HepG2 (cell line): ENCODE measurements at regions of chr9 and their contacts with region 1.

Region 1: DNA sequence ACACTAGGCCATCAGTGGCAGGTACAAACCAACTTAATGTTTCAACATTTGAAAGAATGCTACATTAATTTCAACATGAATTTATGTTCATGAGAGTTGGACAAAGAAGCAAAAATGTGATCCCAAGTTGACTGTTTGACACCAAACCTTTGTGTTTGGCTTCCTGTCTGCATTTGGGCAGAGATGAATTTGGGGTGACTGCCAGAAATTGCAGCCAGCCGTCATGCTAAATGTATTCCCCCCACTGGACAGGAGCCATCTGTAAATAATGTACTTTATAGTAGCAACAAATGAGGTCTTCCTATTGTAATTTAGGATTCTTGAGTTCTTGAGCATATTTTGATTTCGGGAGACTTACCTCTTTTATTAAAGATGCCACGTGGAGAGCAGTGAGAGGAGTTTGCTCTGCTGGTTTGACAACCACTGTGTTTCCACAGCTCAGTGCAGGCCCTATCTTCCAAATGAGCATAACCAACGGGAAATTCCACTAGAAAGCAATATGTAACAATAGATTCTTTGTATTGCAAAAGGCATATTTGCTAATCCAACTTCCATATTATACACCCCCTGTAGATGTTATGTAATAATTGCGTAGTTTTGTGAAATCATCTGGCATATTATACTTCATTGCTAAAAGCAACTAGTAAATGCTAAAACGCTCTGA is 27.6 kb downstream of the ALDH1A1 start:
- DNase-seq: peak; percentile 79
- ATAC-seq: peak; percentile 83
- H3K4me3 ChIP-seq: no peak overlapping the region
- H3K27ac ChIP-seq: peak overlapping the region; percentile 36
- H3K4me1 ChIP-seq: peaks cover 20% of the 10 kb centered on the region
- H3K27me3 ChIP-seq: no peaks in the 10 kb centered on the region
- CTCF ChIP-seq: no peak
- EP300 ChIP-seq: peak in 1 of 2 experiments; percentile 64; a peak in 2 of 4 replicates
- POLR2A ChIP-seq: no peak
- RAD21 ChIP-seq: no peak

Region 2: DNA sequence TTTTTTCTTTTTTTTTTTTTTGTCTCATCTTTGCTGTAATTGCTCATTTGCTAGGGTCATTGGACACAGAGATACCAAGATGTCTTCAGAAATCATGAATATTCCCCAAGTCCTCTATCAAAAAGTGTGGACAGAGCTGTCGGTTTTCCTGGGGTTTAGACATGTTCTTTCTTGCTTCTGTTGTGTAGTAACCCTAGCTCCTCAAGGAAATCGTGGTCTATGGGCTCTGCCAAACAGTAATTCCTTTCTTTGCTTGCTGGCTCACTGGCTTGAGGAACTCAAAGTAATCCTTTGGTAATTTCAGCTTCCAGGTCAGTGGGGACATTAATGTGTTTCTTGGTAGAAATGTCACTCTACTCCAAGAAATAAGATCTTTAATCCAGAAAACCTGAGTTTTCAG is 302.1 kb before region 1 on chr9:
- CTCF ChIA-PET with region 1: no interaction called
- POLR2A ChIA-PET with region 1: no interaction called
- in situ Hi-C with region 1: no loop called
- intact Hi-C with region 1: no loop called
- DNase-seq: no peak
- ATAC-seq: no peak
- H3K4me3 ChIP-seq: no peak overlapping the region
- H3K27ac ChIP-seq: no peak overlapping the region
- H3K4me1 ChIP-seq: no peaks in the 10 kb centered on the region
- H3K27me3 ChIP-seq: 0 out of 5 replicates have a peak, but pooled peaks cover 0 to 3% of the 10 kb centered on the region in 2 experiments
- CTCF ChIP-seq: no peak
- EP300 ChIP-seq: no peak
- POLR2A ChIP-seq: no peak
- RAD21 ChIP-seq: no peak

Region 3: GRCh38 chr9:72680593-72681282 is 244.5 kb before region 1 on chr9:
- CTCF ChIA-PET with region 1: no interaction called
- POLR2A ChIA-PET with region 1: no interaction called
- in situ Hi-C with region 1: no loop called
- intact Hi-C with region 1: no loop called
- DNase-seq: no peak
- ATAC-seq: no peak
- H3K4me3 ChIP-seq: no peak overlapping the region
- H3K27ac ChIP-seq: no peak overlapping the region
- H3K4me1 ChIP-seq: no peaks in the 10 kb centered on the region
- H3K27me3 ChIP-seq: no peaks in the 10 kb centered on the region
- CTCF ChIP-seq: no peak
- EP300 ChIP-seq: no peak
- POLR2A ChIP-seq: no peak
- RAD21 ChIP-seq: no peak

Region 4: GRCh38 chr9:72856972-72857623 is 68.2 kb before region 1 on chr9:
- CTCF ChIA-PET with region 1: no interaction called
- POLR2A ChIA-PET with region 1: interaction called, 4 read pairs
- in situ Hi-C with region 1: no loop called
- intact Hi-C with region 1: loop called (anchors 5 kb)
- DNase-seq: peak; percentile 65
- ATAC-seq: no peak
- H3K4me3 ChIP-seq: no peak overlapping the region
- H3K27ac ChIP-seq: peak overlapping the region; percentile 99
- H3K4me1 ChIP-seq: peaks cover 30% of the 10 kb centered on the region
- H3K27me3 ChIP-seq: no peaks in the 10 kb centered on the region
- CTCF ChIP-seq: peak; percentile 70
- EP300 ChIP-seq: no peak
- POLR2A ChIP-seq: no peak
- RAD21 ChIP-seq: peak; percentile 43; the same call in 1 of the 2 replicates

Region 5: DNA sequence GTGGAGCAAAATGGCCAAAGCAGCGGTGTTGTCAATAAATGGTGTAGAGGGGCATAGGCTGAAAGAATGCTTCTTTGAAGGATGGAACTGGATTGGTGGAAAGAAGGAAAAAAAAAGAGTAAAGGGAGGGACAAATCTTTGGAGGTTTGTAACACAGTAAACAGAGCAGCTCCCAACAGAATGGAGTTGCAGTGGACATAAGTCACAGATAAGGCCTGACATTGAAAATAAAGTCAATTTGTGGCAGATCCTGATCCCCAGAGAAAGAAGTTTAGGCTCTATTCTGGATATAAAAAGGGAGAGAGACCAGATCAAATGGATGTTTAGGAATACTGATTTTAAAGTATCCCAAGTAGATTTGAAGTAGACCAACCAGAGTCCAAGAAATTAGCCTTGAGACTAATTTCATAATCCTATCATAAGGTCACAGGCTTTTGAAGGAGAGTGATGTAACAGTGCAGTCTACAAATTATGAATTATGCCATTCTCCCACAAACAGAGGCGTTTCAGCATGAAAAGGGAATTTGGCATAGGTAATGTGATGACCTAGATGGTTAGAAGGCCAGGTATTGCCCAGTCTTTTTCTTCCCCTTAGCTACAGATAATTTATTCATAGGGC is 18.7 kb after region 1 on chr9:
- CTCF ChIA-PET with region 1: no interaction called
- POLR2A ChIA-PET with region 1: interaction called, 16 read pairs
- in situ Hi-C with region 1: no loop called
- intact Hi-C with region 1: loop called (anchors 2 kb)
- DNase-seq: no peak
- ATAC-seq: no peak
- H3K4me3 ChIP-seq: no peak overlapping the region
- H3K27ac ChIP-seq: no peak overlapping the region
- H3K4me1 ChIP-seq: peaks cover 67% of the 10 kb centered on the region
- H3K27me3 ChIP-seq: no peaks in the 10 kb centered on the region
- CTCF ChIP-seq: no peak
- EP300 ChIP-seq: no peak
- POLR2A ChIP-seq: no peak
- RAD21 ChIP-seq: no peak

Region 6: DNA sequence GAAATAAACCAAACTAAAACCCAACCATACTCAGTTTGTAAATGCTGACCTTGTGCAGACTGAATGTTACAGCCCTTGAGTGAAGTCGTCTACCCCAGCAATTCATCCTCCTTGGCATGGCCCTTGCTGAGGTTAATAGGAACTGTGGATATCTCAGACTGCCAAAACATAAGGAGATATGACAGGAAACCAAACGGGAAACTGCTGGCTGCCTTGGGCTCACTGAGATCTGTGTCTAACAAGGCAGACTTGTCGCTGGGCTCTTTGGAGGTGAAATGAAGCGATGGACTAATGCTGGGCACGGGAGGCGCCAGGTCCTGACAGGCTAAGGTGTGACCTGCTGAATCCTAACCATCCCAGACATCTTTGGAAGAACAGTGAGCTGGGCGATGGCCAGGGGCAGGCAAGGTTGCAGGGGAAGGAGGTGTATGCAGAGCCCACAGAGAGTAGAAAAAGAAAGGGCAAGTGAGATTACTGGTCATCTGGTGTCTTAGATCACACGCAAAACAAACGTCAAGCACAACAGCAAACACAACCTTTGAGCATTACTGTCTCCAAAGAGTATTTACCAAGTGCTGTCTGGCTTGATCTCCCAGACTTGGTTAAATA is 72.2 kb after region 1 on chr9:
- CTCF ChIA-PET with region 1: no interaction called
- POLR2A ChIA-PET with region 1: no interaction called
- in situ Hi-C with region 1: no loop called
- intact Hi-C with region 1: loop called (anchors 5 kb)
- DNase-seq: peak; percentile 93
- ATAC-seq: peak; percentile 99
- H3K4me3 ChIP-seq: peak overlapping the region; percentile 21 to 63 (median 26)
- H3K27ac ChIP-seq: peak overlapping the region; percentile 84
- H3K4me1 ChIP-seq: peaks cover 45% of the 10 kb centered on the region
- H3K27me3 ChIP-seq: no peaks in the 10 kb centered on the region
- CTCF ChIP-seq: no peak
- EP300 ChIP-seq: peak in 1 of 2 experiments; percentile 97; a peak in 2 of 4 replicates
- POLR2A ChIP-seq: peak; percentile 51 to 55; a peak in 2 of 4 replicates
- RAD21 ChIP-seq: no peak